ENCODE measurements at regions of chr7 and their contacts with region 1.

Region 1: GRCh38 chr7:139777948-139778841 is at the start of gene HIPK2:
- DNase-seq: peak; percentile 48 to 89 (median 64)
- ATAC-seq: peak; percentile 59
- H3K4me3 ChIP-seq: peak within 1 kb of the TSS; percentile 87
- H3K4me3 Mint-ChIP-seq: peak within 1 kb of the TSS; percentile 99
- H3K27ac ChIP-seq: peak within 1 kb of the TSS; percentile 71 to 80
- H3K27ac Mint-ChIP-seq: peak within 1 kb of the TSS; percentile 93
- H3K4me1 ChIP-seq: peaks cover 30% of the 10 kb centered on the region
- H3K4me1 Mint-ChIP-seq: peaks cover 48% of the 10 kb centered on the region
- H3K27me3 ChIP-seq: peaks cover 0 to under 1% of the 10 kb centered on the region in 2 experiments
- H3K27me3 Mint-ChIP-seq: no peaks in the 10 kb centered on the region
- CTCF ChIP-seq: no peak
- total RNA-seq, gene HIPK2: 36.5 to 37.0 TPM

Region 2: DNA sequence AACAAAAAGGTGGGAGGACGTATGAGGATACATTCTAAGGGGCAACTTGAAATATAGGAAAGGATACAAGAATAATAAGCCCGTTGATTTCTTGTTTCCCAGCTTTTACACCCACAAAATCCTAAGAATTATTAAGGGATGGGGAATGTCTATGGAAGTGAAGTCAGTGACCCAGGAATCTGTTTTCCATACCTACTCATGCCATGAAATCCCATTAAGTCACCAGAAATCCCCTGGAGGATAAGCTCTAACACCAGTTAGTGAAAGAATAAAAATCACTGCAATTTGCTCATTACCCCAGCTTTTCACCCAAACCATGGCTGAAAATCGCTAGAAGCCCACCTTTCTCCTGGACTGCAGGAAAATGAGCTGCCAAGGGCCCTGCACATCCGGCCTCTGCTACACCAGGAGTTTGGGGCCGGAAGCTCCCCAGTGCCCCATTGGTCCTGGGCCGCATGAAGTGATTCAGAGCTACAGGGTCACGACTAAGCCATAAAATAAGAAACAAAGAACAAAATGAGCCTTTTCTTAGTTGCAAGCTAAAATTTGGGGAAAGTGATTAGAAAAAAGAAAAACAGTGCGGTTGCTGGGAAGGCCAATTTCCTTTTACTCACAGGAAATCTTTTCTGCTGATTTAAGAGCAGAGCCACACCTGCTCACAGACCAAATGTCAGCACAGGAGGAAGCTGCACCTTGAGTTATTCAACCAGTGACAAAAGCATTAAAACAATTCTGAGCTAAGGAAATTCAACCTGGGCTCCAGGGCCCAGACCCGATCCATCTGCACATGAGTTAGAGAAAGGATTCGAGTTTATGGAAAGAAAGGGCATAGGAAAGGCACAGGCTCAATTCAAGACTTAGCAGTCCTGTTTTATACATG is 40.7 kb before region 1 on chr7:
- CTCF ChIA-PET with region 1: no interaction called
- POLR2A ChIA-PET with region 1: interaction called, 23 read pairs
- intact Hi-C with region 1: loop called in 1 of 2 experiments (anchors 5 kb)
- DNase-seq: peak in 6 of 14 experiments; percentile 19 to 45 (median 24)
- ATAC-seq: peak; percentile 72
- H3K4me3 ChIP-seq: no peak overlapping the region
- H3K4me3 Mint-ChIP-seq: peak overlapping the region; percentile 72
- H3K27ac ChIP-seq: peak overlapping the region in 1 of 2 donors; percentile 64
- H3K27ac Mint-ChIP-seq: peak overlapping the region; percentile 91
- H3K4me1 ChIP-seq: peaks cover 53% of the 10 kb centered on the region
- H3K4me1 Mint-ChIP-seq: peaks cover 81% of the 10 kb centered on the region
- H3K27me3 ChIP-seq: no peaks in the 10 kb centered on the region
- H3K27me3 Mint-ChIP-seq: no peaks in the 10 kb centered on the region
- CTCF ChIP-seq: no peak

Region 3: GRCh38 chr7:139808427-139808826 is 30.2 kb after region 1 on chr7:
- CTCF ChIA-PET with region 1: no interaction called
- POLR2A ChIA-PET with region 1: no interaction called
- intact Hi-C with region 1: no loop called
- DNase-seq: no peak
- ATAC-seq: no peak
- H3K4me3 ChIP-seq: no peak overlapping the region
- H3K4me3 Mint-ChIP-seq: no peak overlapping the region
- H3K27ac ChIP-seq: no peak overlapping the region
- H3K27ac Mint-ChIP-seq: no peak overlapping the region
- H3K4me1 ChIP-seq: no peaks in the 10 kb centered on the region
- H3K4me1 Mint-ChIP-seq: no peaks in the 10 kb centered on the region
- H3K27me3 ChIP-seq: no peaks in the 10 kb centered on the region
- H3K27me3 Mint-ChIP-seq: no peaks in the 10 kb centered on the region
- CTCF ChIP-seq: no peak

Region 4: GRCh38 chr7:140003913-140004382 is 225.8 kb after region 1 on chr7:
- CTCF ChIA-PET with region 1: no interaction called
- POLR2A ChIA-PET with region 1: no interaction called
- intact Hi-C with region 1: loop called (anchors 5 kb)
- DNase-seq: peak in 5 of 14 experiments; percentile 7 to 58 (median 46)
- ATAC-seq: no peak
- H3K4me3 ChIP-seq: no peak overlapping the region
- H3K4me3 Mint-ChIP-seq: no peak overlapping the region
- H3K27ac ChIP-seq: no peak overlapping the region
- H3K27ac Mint-ChIP-seq: no peak overlapping the region
- H3K4me1 ChIP-seq: no peaks in the 10 kb centered on the region
- H3K4me1 Mint-ChIP-seq: no peaks in the 10 kb centered on the region
- H3K27me3 ChIP-seq: no peaks in the 10 kb centered on the region
- H3K27me3 Mint-ChIP-seq: no peaks in the 10 kb centered on the region
- CTCF ChIP-seq: peak; percentile 64

Region 5: GRCh38 chr7:140304191-140304799 is 526.1 kb after region 1 on chr7:
- CTCF ChIA-PET with region 1: no interaction called
- POLR2A ChIA-PET with region 1: no interaction called
- intact Hi-C with region 1: loop called in 1 of 2 experiments (anchors 10 kb)
- DNase-seq: peak in 13 of 14 experiments; percentile 7 to 79 (median 34)
- ATAC-seq: peak; percentile 95
- H3K4me3 ChIP-seq: no peak overlapping the region
- H3K4me3 Mint-ChIP-seq: no peak overlapping the region
- H3K27ac ChIP-seq: no peak overlapping the region
- H3K27ac Mint-ChIP-seq: peak overlapping the region; percentile 21
- H3K4me1 ChIP-seq: peaks cover 4% of the 10 kb centered on the region
- H3K4me1 Mint-ChIP-seq: peaks cover 6% of the 10 kb centered on the region
- H3K27me3 ChIP-seq: no peaks in the 10 kb centered on the region
- H3K27me3 Mint-ChIP-seq: no peaks in the 10 kb centered on the region
- CTCF ChIP-seq: peak; percentile 66

Measured in CD4-positive, alpha-beta T cell (primary cell).